ENCODE measurements at regions of chr11 and their contacts with region 1.

Region 1: GRCh38 chr11:59158206-59159068 is 13.5 kb upstream of the DTX4 start:
- DNase-seq: peak; percentile 31 to 85 (median 59)
- ATAC-seq: peak; percentile 99
- H3K4me3 ChIP-seq: no peak overlapping the region
- H3K4me3 Mint-ChIP-seq: no peak overlapping the region
- H3K27ac ChIP-seq: no peak overlapping the region
- H3K27ac Mint-ChIP-seq: no peak overlapping the region
- H3K4me1 ChIP-seq: no peaks in the 10 kb centered on the region
- H3K4me1 Mint-ChIP-seq: peaks cover 4% of the 10 kb centered on the region
- H3K27me3 ChIP-seq: no peaks in the 10 kb centered on the region
- H3K27me3 Mint-ChIP-seq: peaks cover 22% of the 10 kb centered on the region
- CTCF ChIP-seq: peak; percentile 77

Region 2: DNA sequence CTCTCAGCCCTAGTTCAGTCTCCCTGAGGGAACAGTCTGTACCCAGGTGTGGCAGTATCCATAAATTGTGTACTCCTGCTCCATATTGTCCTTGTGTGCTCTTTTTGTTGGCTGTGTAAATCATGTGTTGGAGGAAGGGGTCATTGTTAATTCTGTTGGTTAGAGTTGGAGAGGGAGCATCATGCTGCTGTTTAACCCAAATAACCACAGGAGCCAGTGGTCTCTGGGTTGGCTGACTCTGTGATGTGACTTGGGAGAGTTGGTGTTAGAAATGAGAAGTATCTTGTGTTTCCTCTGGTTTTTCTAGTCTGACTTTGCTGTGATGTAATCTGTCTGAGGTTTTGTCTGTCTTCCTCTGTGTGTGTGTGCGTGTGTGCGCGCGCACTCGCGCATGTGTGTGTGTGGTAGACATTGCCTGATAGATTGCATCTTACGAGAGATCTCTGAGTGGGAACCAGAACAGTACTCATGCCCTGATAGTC is 1366.3 kb before region 1 on chr11:
- CTCF ChIA-PET with region 1: no interaction called
- POLR2A ChIA-PET with region 1: no interaction called
- intact Hi-C with region 1: loop called in 1 of 2 experiments (anchors 10 kb)
- DNase-seq: peak; percentile 78 to 95 (median 86)
- ATAC-seq: peak; percentile 95
- H3K4me3 ChIP-seq: peak overlapping the region in 1 of 2 experiments; percentile 21
- H3K4me3 Mint-ChIP-seq: peak overlapping the region; percentile 55
- H3K27ac ChIP-seq: peak overlapping the region; percentile 42 to 60
- H3K27ac Mint-ChIP-seq: peak overlapping the region; percentile 98
- H3K4me1 ChIP-seq: peaks cover 33% of the 10 kb centered on the region
- H3K4me1 Mint-ChIP-seq: peaks cover 36% of the 10 kb centered on the region
- H3K27me3 ChIP-seq: no peaks in the 10 kb centered on the region
- H3K27me3 Mint-ChIP-seq: no peaks in the 10 kb centered on the region
- CTCF ChIP-seq: no peak

Region 3: DNA sequence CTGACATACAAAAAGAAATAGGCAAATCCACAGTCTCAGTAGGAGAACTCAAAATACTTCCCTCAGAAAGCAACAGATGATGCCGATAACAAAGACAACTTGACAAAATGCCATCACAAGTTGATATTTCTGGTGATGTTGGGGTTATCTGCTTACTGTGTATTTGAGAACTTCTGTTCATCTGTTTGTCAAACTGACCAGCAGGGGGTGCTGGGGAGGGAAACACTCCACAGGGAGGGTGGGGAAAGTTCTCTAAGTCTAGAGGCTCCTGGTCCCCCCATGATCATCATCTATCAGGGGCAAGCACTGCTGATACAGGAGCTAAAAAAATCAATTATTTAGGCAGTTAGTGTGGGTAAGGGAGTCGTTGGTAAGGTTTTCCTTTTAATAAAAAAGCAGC is 199.9 kb before region 1 on chr11:
- CTCF ChIA-PET with region 1: interaction called, 10 read pairs
- POLR2A ChIA-PET with region 1: no interaction called
- intact Hi-C with region 1: loop called in 1 of 2 experiments (anchors 1 kb)
- DNase-seq: peak in 6 of 9 experiments; percentile 2 to 56 (median 30)
- ATAC-seq: no peak
- H3K4me3 ChIP-seq: no peak overlapping the region
- H3K4me3 Mint-ChIP-seq: no peak overlapping the region
- H3K27ac ChIP-seq: no peak overlapping the region
- H3K27ac Mint-ChIP-seq: no peak overlapping the region
- H3K4me1 ChIP-seq: no peaks in the 10 kb centered on the region
- H3K4me1 Mint-ChIP-seq: no peaks in the 10 kb centered on the region
- H3K27me3 ChIP-seq: no peaks in the 10 kb centered on the region
- H3K27me3 Mint-ChIP-seq: peaks cover 9% of the 10 kb centered on the region
- CTCF ChIP-seq: peak; percentile 24

Region 4: GRCh38 chr11:59062602-59063529 is 95.6 kb before region 1 on chr11:
- CTCF ChIA-PET with region 1: interaction called, 20 read pairs
- POLR2A ChIA-PET with region 1: no interaction called
- intact Hi-C with region 1: no loop called
- DNase-seq: no peak
- ATAC-seq: no peak
- H3K4me3 ChIP-seq: no peak overlapping the region
- H3K4me3 Mint-ChIP-seq: no peak overlapping the region
- H3K27ac ChIP-seq: no peak overlapping the region
- H3K27ac Mint-ChIP-seq: no peak overlapping the region
- H3K4me1 ChIP-seq: no peaks in the 10 kb centered on the region
- H3K4me1 Mint-ChIP-seq: peaks cover 10% of the 10 kb centered on the region
- H3K27me3 ChIP-seq: peaks cover 0 to 6% of the 10 kb centered on the region in 2 experiments
- H3K27me3 Mint-ChIP-seq: peaks cover 52% of the 10 kb centered on the region
- CTCF ChIP-seq: no peak

Region 5: DNA sequence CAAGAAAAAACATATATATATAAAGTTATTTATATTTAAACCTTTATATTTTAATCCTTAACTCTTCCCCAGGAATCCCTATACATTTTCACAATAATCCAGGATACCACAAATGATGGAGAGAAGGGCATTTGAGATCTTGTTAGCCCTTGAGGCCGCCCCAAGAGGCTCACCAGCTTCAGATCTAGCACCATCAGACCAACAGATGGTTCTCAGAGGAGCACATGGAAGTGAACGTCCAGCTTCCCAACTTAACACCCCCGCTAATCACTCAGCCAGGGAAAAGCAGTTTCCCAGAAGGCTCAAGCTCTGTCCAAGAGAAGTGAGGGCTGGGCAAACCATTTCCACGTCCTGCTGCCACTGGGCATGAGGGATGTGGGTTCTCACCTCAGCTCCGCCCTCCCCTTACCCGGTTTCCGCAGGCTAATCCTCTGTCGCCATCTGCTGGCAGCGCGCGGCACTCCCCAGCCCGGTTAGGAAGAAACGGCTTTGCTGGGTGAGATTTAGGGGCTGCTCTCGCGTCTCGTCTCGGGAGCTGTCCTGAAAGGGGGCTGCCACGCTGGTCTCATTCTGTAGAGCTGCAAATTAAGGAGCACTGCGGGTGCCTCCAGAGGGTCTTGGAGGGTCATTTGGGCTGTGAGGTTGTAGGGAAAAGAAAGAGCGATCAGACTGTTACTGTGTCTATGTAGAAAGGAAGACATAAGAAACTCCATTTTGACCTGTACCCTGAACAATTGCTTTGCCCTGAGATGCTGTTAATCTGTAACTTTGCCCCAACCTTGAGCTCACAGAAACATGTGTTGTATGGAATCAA is 22.6 kb before region 1 on chr11:
- CTCF ChIA-PET with region 1: interaction called, 73 read pairs
- POLR2A ChIA-PET with region 1: no interaction called
- intact Hi-C with region 1: no loop called
- DNase-seq: peak; percentile 80 to 93 (median 89)
- ATAC-seq: peak; percentile 100
- H3K4me3 ChIP-seq: no peak overlapping the region
- H3K4me3 Mint-ChIP-seq: peak overlapping the region; percentile 66
- H3K27ac ChIP-seq: peak overlapping the region in 1 of 2 experiments; percentile 23
- H3K27ac Mint-ChIP-seq: peak overlapping the region; percentile 55
- H3K4me1 ChIP-seq: peaks cover 7% of the 10 kb centered on the region
- H3K4me1 Mint-ChIP-seq: peaks cover 8% of the 10 kb centered on the region
- H3K27me3 ChIP-seq: no peaks in the 10 kb centered on the region
- H3K27me3 Mint-ChIP-seq: no peaks in the 10 kb centered on the region
- CTCF ChIP-seq: peak; percentile 98

Region 6: GRCh38 chr11:59186130-59186594 is 27.7 kb after region 1 on chr11:
- CTCF ChIA-PET with region 1: interaction called, 11 read pairs
- POLR2A ChIA-PET with region 1: no interaction called
- intact Hi-C with region 1: no loop called
- DNase-seq: peak in 8 of 9 experiments; percentile 19 to 68 (median 56)
- ATAC-seq: peak; percentile 78
- H3K4me3 ChIP-seq: no peak overlapping the region
- H3K4me3 Mint-ChIP-seq: no peak overlapping the region
- H3K27ac ChIP-seq: no peak overlapping the region
- H3K27ac Mint-ChIP-seq: no peak overlapping the region
- H3K4me1 ChIP-seq: no peaks in the 10 kb centered on the region
- H3K4me1 Mint-ChIP-seq: peaks cover 2% of the 10 kb centered on the region
- H3K27me3 ChIP-seq: no peaks in the 10 kb centered on the region
- H3K27me3 Mint-ChIP-seq: peaks cover 3% of the 10 kb centered on the region
- CTCF ChIP-seq: peak; percentile 65